Gastrocnemius medialis (tissue), 4 donors: ENCODE measurements at regions of chr9 and their contacts with region 1.

Region 1: GRCh38 chr9:35553670-35554543 is 51.2 kb upstream of the TESK1 start:
- DNase-seq: peak; percentile 55 to 81
- ATAC-seq: peak; percentile 72 to 81
- H3K4me3 ChIP-seq: no peak overlapping the region
- H3K27ac ChIP-seq: peak overlapping the region; percentile 83 to 95 (median 90)
- H3K4me1 ChIP-seq: peaks cover 51 to 81% of the 10 kb centered on the region in 2 donors
- H3K27me3 ChIP-seq: no peaks in the 10 kb centered on the region
- CTCF ChIP-seq: peak; percentile 93 to 98 (median 93)
- POLR2A ChIP-seq: no peak

Region 2: DNA sequence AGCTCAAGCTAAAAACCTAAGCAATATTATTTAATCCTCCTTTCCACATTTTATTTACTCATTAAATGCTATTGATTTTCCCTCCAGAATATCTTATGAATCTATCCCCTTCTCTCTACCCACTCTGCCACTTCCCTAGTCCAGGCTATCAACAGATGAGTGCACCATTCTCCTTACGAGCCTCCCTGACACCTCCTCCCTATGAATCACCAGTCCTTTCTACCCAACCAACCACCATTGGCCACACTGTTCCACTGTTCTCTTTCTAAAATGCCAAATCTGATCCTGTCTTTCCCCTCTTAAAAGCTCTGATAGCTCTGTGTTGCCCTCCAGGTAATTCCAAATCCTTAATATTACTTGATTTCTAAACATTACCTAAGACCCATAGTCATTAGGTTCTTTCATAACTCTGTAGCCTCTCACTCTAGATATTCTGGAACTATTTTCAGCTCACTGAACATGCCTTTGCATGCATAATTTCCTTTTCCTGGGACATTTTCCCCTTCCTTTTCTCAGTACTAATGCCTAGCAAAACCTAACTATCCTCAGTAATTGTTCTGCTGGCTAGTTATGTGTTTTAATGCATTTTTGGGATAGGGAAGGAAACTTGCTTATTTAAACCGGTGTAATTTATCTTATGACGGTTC is 265.8 kb before region 1 on chr9:
- in situ Hi-C with region 1: no loop called
- intact Hi-C with region 1: loop called (anchors 10 kb)
- DNase-seq: no peak
- ATAC-seq: no peak
- H3K4me3 ChIP-seq: no peak overlapping the region
- H3K27ac ChIP-seq: peak overlapping the region in 2 of 4 donors; percentile 18 to 40
- H3K4me1 ChIP-seq: peaks cover 31 to 48% of the 10 kb centered on the region in 2 donors
- H3K27me3 ChIP-seq: no peaks in the 10 kb centered on the region
- CTCF ChIP-seq: no peak
- POLR2A ChIP-seq: no peak

Region 3: DNA sequence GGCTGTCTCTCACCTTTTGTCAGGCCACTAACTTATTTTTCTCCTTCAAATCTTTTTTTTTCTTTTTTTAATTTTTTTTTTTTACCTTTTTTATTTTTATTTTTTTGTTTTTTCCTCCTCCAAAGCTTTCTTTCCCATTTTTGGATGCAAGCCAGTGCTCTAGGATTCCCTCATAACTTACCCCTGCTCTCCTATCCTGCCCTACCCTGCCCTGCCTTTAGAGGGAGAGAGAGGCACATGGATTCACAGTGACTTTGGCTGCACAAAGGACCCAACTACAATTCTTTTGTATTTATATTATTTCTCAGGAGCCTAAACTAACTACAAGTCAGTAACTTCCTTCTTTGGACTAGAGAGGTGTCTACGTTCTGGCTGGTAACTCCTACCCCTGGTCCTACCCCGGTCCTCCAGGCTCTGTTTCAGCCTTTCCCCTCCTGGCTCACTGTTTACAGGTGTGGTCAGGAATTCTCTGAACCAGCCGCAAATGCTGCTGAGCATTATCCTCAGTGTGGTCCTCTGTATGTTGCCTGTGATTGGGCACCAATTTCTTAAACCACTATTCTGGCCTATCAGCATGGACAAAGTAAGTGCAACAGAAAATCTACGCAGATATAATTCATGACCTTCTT is 72.4 kb before region 1 on chr9:
- in situ Hi-C with region 1: loop called (anchors 5 kb)
- intact Hi-C with region 1: loop called (anchors 1 kb)
- DNase-seq: peak; percentile 27 to 71
- ATAC-seq: peak; percentile 68 to 78
- H3K4me3 ChIP-seq: no peak overlapping the region
- H3K27ac ChIP-seq: no peak overlapping the region
- H3K4me1 ChIP-seq: no peaks in the 10 kb centered on the region
- H3K27me3 ChIP-seq: no peaks in the 10 kb centered on the region
- CTCF ChIP-seq: peak; percentile 74 to 89 (median 78)
- POLR2A ChIP-seq: no peak

Region 4: DNA sequence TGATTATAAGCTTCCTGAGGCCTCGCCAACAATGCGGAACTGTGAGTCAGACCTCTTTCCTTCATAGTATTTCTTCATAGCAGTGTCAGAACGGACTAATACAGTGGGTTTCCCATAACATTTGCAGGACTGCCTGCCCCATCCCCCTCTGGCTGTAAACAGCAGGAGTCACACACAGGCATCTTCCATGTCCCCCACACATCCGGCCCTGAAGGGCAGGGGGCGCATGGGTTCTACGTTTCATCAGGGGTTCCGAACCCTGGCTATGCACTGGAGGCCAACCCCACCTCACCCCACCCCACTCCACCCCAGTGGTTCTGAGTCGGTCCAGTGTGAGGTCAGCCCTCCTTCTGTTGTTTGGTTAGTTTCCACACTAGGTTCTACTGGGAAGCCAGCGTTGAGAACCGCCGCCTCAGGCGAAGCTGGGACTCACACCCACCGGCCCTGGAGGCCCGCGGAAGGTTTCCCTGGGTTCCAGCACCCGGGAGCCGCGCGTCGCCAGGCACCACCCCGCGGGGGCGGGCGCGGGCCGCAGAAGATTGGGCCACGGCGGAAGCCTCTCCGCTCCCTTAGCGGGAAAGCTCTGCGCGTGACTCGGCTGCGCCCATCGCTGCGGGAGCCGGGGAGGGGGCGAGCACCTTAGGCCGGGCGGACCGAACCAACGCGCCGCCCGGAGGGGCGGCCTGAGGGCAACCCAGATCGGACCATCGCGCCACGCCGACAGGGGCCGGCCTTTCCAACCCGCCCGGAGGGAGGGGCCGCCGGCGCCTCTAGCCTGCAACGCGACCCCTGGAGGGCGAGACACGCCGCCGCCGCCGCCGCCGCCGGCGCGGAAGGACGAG is 64.4 kb before region 1 on chr9 and contains the start of gene RUSC2:
- in situ Hi-C with region 1: loop called in 3 of 4 experiments (anchors 5 kb)
- intact Hi-C with region 1: loop called (anchors 1 kb)
- DNase-seq: peak; percentile 72 to 88
- ATAC-seq: peak; percentile 56 to 71
- H3K4me3 ChIP-seq: peak within 1 kb of the TSS; percentile 79 to 89 (median 88)
- H3K27ac ChIP-seq: peak within 1 kb of the TSS; percentile 91 to 97 (median 96)
- H3K4me1 ChIP-seq: peaks cover 31% of the 10 kb centered on the region in 2 donors
- H3K27me3 ChIP-seq: no peaks in the 10 kb centered on the region
- CTCF ChIP-seq: peak; percentile 52 to 83 (median 61)
- POLR2A ChIP-seq: peak; percentile 86 to 88
- total RNA-seq, gene RUSC2: 20.8 to 166 (median 45.7) TPM

Region 5: DNA sequence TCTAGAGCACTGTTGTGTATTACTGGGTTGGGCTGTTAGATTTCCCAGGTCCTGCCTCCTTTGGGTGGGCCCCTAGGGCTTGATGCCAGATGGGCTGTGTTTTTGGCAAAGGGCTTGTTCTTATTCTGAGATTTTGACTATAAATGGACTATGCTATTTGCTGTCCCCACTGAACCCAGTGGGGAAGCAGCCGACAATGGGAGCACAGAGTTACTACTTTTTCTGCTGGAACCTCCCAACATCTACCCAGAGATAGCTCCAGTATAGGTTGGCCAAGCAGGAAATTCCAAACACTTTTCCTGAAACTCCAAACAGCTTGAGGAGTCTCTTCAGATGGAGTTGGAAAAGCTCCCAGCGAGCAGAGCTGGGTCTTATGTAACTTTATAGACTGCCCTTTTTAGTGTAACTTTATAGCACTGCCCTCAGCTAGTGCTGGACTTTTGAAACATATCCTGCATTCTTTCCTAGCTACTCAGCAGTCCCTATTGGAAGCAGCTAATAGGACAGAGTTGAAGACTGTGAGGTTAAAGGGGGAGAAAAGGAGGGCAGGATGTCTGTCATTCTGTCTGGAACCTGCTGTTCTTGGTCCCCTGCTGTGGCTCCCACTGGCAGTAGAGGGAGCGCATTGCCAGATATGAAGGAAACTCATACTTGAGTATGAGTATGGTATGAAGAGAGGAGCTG is 43.0 kb before region 1 on chr9:
- in situ Hi-C with region 1: no loop called
- intact Hi-C with region 1: loop called (anchors 2 kb)
- DNase-seq: peak; percentile 54 to 87
- ATAC-seq: peak; percentile 97 to 99
- H3K4me3 ChIP-seq: peak overlapping the region in 1 of 4 donors; percentile 0
- H3K27ac ChIP-seq: peak overlapping the region; percentile 82 to 95 (median 88)
- H3K4me1 ChIP-seq: peaks cover 62 to 65% of the 10 kb centered on the region in 2 donors
- H3K27me3 ChIP-seq: no peaks in the 10 kb centered on the region
- CTCF ChIP-seq: peak in 2 of 5 experiments; percentile 31 to 46
- POLR2A ChIP-seq: peak in 1 of 2 donors; percentile 36

Region 6: DNA sequence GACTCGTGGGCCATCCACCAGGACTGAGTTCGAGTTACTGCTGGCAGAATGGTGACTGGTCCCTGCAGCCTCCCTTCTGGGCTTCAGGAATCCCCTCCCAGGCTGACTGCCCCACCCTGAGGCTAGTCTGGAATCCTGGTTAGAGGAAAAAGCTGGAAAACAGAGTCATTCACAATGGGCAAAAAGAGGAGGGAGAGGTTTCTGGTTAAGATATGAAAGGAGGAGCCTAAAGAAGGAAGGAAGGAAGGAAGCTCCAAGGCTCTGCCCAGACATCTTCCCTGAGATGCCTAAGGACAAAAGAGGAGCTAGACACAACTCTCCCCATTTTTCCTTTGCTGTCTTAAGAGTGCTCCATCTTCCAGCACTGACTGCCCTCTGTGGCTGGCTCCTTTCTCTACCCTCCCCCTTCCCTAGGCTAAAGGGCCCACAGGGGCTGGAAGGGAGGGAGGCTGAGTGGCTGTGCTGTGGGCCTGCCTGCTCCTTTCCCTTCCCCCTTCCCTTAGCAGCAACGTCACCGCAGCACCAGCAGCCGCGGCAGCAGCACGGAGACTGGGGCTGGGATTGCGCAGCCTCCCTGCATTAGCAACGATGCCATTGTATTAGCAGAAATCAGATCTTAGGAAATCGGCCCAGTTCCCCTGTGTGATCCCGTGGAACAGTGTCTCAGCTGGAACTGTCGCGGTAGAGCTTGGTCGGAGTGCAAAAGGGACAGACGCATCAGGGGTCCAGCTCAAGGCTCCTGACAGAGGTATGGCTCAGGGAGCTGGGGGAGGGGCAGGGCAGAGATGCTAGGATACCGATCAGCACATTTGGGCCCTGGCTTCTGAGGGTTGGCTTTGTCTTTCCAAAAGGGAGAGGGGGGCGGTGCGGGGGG is 15.3 kb before region 1 on chr9:
- in situ Hi-C with region 1: no loop called
- intact Hi-C with region 1: loop called (anchors 1 kb)
- DNase-seq: peak in 1 of 2 donors; percentile 57
- ATAC-seq: peak; percentile 47 to 65
- H3K4me3 ChIP-seq: peak overlapping the region; percentile 14 to 46 (median 39)
- H3K27ac ChIP-seq: peak overlapping the region; percentile 79 to 85 (median 81)
- H3K4me1 ChIP-seq: peaks cover 73 to 83% of the 10 kb centered on the region in 2 donors
- H3K27me3 ChIP-seq: no peaks in the 10 kb centered on the region
- CTCF ChIP-seq: no peak
- POLR2A ChIP-seq: peak in 1 of 2 donors; percentile 27

Region 7: GRCh38 chr9:35657546-35658136 is 103.7 kb after region 1 on chr9 and contains the start of gene RMRP:
- in situ Hi-C with region 1: loop called in 1 of 4 experiments (anchors 25 kb)
- intact Hi-C with region 1: no loop called
- DNase-seq: peak; percentile 97 to 98
- ATAC-seq: peak; percentile 91 to 96
- H3K4me3 ChIP-seq: peak within 1 kb of the TSS; percentile 79 to 85 (median 82)
- H3K27ac ChIP-seq: peak within 1 kb of the TSS; percentile 92 to 97 (median 96)
- H3K4me1 ChIP-seq: peaks cover 28 to 29% of the 10 kb centered on the region in 2 donors
- H3K27me3 ChIP-seq: no peaks in the 10 kb centered on the region
- CTCF ChIP-seq: peak; percentile 44 to 56 (median 52)
- POLR2A ChIP-seq: peak; percentile 56 to 61
- total RNA-seq, gene RMRP: 115 to 715 (median 367) TPM